WTC11 (cell line): ENCODE measurements at regions of chr13 and their contacts with region 1.

Region 1: GRCh38 chr13:103067751-103068555 is 1.7 kb upstream of the SLC10A2 start:
- DNase-seq: peak; percentile 70
- ATAC-seq: peak; percentile 94
- H3K4me3 Mint-ChIP-seq: peak overlapping the region; percentile 27
- H3K27ac Mint-ChIP-seq: peak overlapping the region; percentile 91
- H3K4me1 Mint-ChIP-seq: peaks cover 50% of the 10 kb centered on the region
- H3K27me3 Mint-ChIP-seq: no peaks in the 10 kb centered on the region
- CTCF ChIP-seq: no peak

Region 2: GRCh38 chr13:102913914-102914313 is 154.0 kb before region 1 on chr13:
- CTCF ChIA-PET with region 1: interaction called, 13 read pairs
- POLR2A ChIA-PET with region 1: no interaction called
- DNase-seq: no peak
- ATAC-seq: no peak
- H3K4me3 Mint-ChIP-seq: no peak overlapping the region
- H3K27ac Mint-ChIP-seq: no peak overlapping the region
- H3K4me1 Mint-ChIP-seq: no peaks in the 10 kb centered on the region
- H3K27me3 Mint-ChIP-seq: no peaks in the 10 kb centered on the region
- CTCF ChIP-seq: no peak

Region 3: DNA sequence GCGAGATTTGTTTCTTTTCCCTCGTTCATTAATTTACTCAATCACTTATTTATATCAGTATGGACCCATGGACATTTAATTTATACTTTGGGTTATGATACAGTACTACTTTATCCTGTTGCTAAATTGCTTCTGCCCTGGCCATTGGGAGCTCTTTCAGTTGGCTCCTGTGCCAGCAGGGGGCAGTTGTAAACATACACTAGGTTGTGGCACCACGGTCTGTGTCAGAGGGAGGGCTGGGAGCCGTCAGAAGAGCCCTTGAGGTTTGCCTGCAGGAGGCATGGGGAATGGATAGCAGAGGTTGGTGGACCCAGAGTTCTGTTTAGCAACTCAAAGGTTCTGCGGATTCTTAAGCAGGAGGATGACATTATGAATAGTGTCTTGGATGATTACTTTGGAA is 127.8 kb before region 1 on chr13:
- CTCF ChIA-PET with region 1: interaction called, 10 read pairs
- POLR2A ChIA-PET with region 1: no interaction called
- DNase-seq: peak; percentile 51
- ATAC-seq: peak; percentile 86
- H3K4me3 Mint-ChIP-seq: no peak overlapping the region
- H3K27ac Mint-ChIP-seq: no peak overlapping the region
- H3K4me1 Mint-ChIP-seq: peaks cover 24% of the 10 kb centered on the region
- H3K27me3 Mint-ChIP-seq: no peaks in the 10 kb centered on the region; the same call in 1 of the 2 replicates
- CTCF ChIP-seq: no peak

Region 4: DNA sequence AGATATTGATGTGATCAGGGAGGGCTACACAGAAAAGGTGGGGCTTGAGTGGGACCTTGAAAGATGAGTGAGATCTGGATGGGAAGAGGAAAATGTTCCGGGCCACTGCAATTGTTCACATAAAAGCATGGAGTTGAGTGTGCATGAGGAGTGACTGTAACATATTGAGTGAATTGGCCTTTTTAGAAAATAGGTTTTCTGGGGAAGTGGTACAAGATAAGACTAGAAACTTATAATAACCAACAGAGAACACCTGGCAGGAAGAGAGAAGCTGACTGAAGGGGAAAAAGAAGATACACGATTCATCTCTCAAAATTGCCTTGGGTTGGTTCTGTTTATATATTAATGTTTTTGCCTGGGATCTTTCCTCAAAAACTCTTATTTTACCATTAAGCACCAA is 34.0 kb before region 1 on chr13:
- CTCF ChIA-PET with region 1: interaction called, 10 read pairs
- POLR2A ChIA-PET with region 1: no interaction called
- DNase-seq: no peak
- ATAC-seq: no peak
- H3K4me3 Mint-ChIP-seq: no peak overlapping the region
- H3K27ac Mint-ChIP-seq: no peak overlapping the region
- H3K4me1 Mint-ChIP-seq: peaks cover 6% of the 10 kb centered on the region; the same call in 1 of the 2 replicates
- H3K27me3 Mint-ChIP-seq: no peaks in the 10 kb centered on the region
- CTCF ChIP-seq: no peak

Region 5: DNA sequence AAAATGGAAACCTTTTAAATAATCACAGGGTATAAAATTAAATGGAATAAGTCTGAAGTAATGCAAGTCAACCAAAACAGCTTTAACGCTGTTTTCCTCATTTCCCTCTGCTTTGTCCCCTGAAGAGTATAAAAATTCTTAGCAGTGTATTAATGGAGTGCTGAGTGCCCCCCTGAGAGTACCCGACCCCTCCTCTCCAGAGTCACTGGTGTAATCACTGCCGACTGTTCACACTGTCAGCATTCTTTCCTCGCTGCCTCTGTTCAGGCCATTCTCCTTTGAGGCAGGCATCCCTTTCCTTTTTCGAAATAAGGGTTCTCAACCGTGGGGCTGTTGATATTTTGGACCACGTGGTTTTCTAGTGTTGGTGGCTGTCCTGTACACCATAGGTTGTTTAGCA is 145.2 kb after region 1 on chr13:
- CTCF ChIA-PET with region 1: no interaction called
- POLR2A ChIA-PET with region 1: no interaction called
- DNase-seq: no peak
- ATAC-seq: no peak
- H3K4me3 Mint-ChIP-seq: no peak overlapping the region
- H3K27ac Mint-ChIP-seq: no peak overlapping the region
- H3K4me1 Mint-ChIP-seq: peaks cover 2% of the 10 kb centered on the region; the same call in 1 of the 2 replicates
- H3K27me3 Mint-ChIP-seq: no peaks in the 10 kb centered on the region
- CTCF ChIP-seq: no peak